Heart right ventricle (tissue), 16 donors: ENCODE measurements at regions of chr19 and their contacts with region 1.

Region 1: GRCh38 chr19:17539238-17540117 is 16.0 kb upstream of the COLGALT1 start:
- DNase-seq: peak; percentile 95 to 96
- ATAC-seq: peak; percentile 90 to 95 (median 92)
- H3K4me3 ChIP-seq: peak overlapping the region; percentile 25 to 65 (median 57)
- H3K27ac ChIP-seq: peak overlapping the region in 8 of 10 donors; percentile 22 to 69 (median 62)
- H3K4me1 ChIP-seq: peaks cover 7 to 14% (median 10%) of the 10 kb centered on the region in 9 donors
- H3K27me3 ChIP-seq: peaks cover 0 to 10% (median 0%) of the 10 kb centered on the region in 7 donors
- CTCF ChIP-seq: peak in 7 of 9 donors; percentile 35 to 75 (median 60)

Region 2: DNA sequence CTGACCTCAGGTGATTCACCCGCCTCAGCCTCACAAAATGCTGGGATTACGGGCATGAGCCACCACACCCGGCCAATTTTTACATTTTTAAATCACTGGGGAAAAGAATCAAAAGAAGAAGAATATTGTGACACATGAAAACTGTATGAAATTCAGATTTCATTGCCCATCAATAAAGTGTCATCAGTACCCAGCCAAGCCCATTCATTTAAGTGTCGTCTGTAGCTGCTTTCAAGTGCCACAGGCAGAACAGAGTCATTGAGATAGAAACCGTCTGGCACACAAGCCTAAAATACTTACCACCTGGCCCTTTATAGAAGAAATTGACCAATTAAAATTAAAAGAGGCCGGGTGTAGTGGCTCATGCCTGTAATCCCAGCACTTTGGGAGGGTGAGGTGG is 31.3 kb after region 1 on chr19:
- intact Hi-C with region 1: loop called in 4 of 10 experiments (anchors 1 to 5 kb)
- DNase-seq: no peak
- ATAC-seq: no peak
- H3K4me3 ChIP-seq: no peak overlapping the region
- H3K27ac ChIP-seq: no peak overlapping the region
- H3K4me1 ChIP-seq: peaks cover 0 to 13% (median 0%) of the 10 kb centered on the region in 9 donors
- H3K27me3 ChIP-seq: no peaks in the 10 kb centered on the region
- CTCF ChIP-seq: no peak

Region 3: GRCh38 chr19:17579661-17580244 is 40.3 kb after region 1 on chr19:
- intact Hi-C with region 1: loop called in 5 of 10 experiments (anchors 1 to 10 kb)
- DNase-seq: peak; percentile 35 to 55
- ATAC-seq: peak; percentile 54 to 81 (median 68)
- H3K4me3 ChIP-seq: no peak overlapping the region
- H3K27ac ChIP-seq: no peak overlapping the region
- H3K4me1 ChIP-seq: peaks cover 0 to 3% (median 0%) of the 10 kb centered on the region in 9 donors
- H3K27me3 ChIP-seq: no peaks in the 10 kb centered on the region
- CTCF ChIP-seq: no peak